MCF 10A (cell line): ENCODE measurements at regions of chr2 and their contacts with region 1.

Region 1: GRCh38 chr2:38274286-38275276 is 102.5 kb downstream of the ATL2 start:
- DNase-seq: peak; percentile 84
- H3K4me3 Mint-ChIP-seq: no peak overlapping the region
- H3K27ac Mint-ChIP-seq: no peak overlapping the region
- H3K4me1 Mint-ChIP-seq: peaks cover 8% of the 10 kb centered on the region
- H3K27me3 Mint-ChIP-seq: no peaks in the 10 kb centered on the region
- CTCF ChIP-seq: peak; percentile 78

Region 2: DNA sequence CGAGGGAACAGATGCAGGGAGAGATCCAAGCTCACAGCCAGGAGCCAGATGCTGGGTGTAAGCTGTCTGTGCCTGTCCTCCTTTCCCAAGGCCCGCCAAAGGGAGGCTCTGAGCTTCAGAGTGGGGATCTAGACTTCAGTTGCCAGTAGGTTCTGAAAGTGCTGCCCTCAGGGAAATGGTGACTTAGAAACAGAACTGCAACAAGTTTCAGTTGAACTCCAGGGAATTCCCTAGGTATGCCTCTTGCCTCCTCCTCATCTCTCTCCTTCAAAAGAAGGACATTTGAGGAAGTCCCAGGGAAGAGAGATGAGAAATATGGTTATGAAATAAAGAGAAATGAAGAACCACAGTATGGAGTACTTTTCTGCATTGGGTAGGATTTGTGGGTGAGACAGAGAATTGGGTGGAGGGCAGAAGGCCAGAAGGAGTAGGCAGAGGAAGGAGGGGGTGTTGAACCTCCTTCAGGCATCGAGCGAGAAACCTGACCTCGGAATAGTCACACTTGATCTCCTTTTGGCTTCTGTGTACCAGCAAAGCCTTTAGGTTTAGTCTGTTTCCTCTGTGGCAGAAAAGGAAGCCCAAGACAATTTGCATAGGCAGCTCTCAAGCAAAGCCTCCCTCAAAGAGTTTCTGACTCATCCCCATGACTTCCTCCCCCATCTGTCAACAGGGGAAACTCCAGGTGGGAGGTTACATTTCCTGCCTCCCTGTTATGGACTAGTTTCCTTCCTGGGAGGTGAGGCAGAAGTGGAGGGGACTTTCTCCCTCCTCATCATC is 884.4 kb before region 1 on chr2:
- CTCF ChIA-PET with region 1: no interaction called
- POLR2A ChIA-PET with region 1: no interaction called
- intact Hi-C with region 1: loop called (anchors 10 kb)
- DNase-seq: peak; percentile 92
- H3K4me3 Mint-ChIP-seq: no peak overlapping the region
- H3K27ac Mint-ChIP-seq: peak overlapping the region; percentile 64
- H3K4me1 Mint-ChIP-seq: peaks cover 19% of the 10 kb centered on the region
- H3K27me3 Mint-ChIP-seq: no peaks in the 10 kb centered on the region
- CTCF ChIP-seq: no peak

Region 3: DNA sequence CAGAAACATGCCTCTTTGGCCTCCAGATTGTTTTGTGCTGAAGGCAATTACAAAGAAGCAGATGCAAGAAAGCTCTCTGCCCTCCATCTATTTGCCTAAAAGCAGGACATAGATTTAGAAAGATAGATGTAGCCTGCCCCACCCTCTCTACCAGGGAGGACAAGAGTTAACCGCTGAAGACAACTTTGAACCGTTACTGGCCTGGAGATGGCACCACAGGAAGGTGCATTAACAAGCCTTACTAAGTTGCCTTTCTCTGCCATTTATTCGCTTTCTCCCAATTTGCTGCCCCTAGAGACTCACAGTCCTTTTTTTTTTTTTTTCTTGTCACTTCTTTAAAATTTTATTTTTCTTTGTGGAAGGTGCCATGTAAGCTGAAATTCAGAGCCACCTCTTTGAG is 378.3 kb before region 1 on chr2:
- CTCF ChIA-PET with region 1: interaction called, 5 read pairs
- POLR2A ChIA-PET with region 1: no interaction called
- intact Hi-C with region 1: loop called (anchors 1 kb)
- DNase-seq: no peak
- H3K4me3 Mint-ChIP-seq: no peak overlapping the region
- H3K27ac Mint-ChIP-seq: no peak overlapping the region
- H3K4me1 Mint-ChIP-seq: peaks cover 14% of the 10 kb centered on the region
- H3K27me3 Mint-ChIP-seq: no peaks in the 10 kb centered on the region
- CTCF ChIP-seq: no peak

Region 4: GRCh38 chr2:38115216-38116032 is 159.2 kb before region 1 on chr2:
- CTCF ChIA-PET with region 1: interaction called, 4 read pairs
- POLR2A ChIA-PET with region 1: interaction called, 5 read pairs
- intact Hi-C with region 1: loop called (anchors 1 kb)
- DNase-seq: peak; percentile 94
- H3K4me3 Mint-ChIP-seq: no peak overlapping the region
- H3K27ac Mint-ChIP-seq: no peak overlapping the region
- H3K4me1 Mint-ChIP-seq: peaks cover 28% of the 10 kb centered on the region
- H3K27me3 Mint-ChIP-seq: no peaks in the 10 kb centered on the region
- CTCF ChIP-seq: peak; percentile 96

Region 5: DNA sequence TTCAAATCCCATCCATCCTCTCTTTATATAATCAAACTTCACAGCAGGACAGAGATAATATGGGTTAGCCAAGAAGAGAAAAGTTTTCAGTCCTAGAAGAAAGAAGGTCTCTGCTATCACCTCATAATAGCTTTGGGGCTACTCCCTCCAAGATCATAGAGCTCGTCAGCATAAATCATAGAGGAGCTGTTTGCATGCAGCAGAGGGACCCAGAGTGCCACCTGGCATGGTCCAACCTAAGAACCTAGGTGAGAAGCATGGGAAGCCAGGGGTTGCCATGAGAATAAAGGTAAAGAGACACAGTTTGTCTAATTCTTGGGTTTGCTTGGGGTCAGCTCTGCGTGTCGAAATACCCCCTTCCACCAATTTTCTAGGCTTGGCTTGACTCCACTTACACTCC is 111.6 kb before region 1 on chr2:
- CTCF ChIA-PET with region 1: interaction called, 3 read pairs
- POLR2A ChIA-PET with region 1: interaction called, 3 read pairs
- intact Hi-C with region 1: loop called (anchors 1 kb)
- DNase-seq: no peak
- H3K4me3 Mint-ChIP-seq: no peak overlapping the region
- H3K27ac Mint-ChIP-seq: peak overlapping the region; percentile 24
- H3K4me1 Mint-ChIP-seq: no peaks in the 10 kb centered on the region
- H3K27me3 Mint-ChIP-seq: no peaks in the 10 kb centered on the region
- CTCF ChIP-seq: no peak

Region 6: GRCh38 chr2:38201784-38202183 is 72.8 kb before region 1 on chr2:
- CTCF ChIA-PET with region 1: no interaction called
- POLR2A ChIA-PET with region 1: no interaction called
- intact Hi-C with region 1: no loop called
- DNase-seq: no peak
- H3K4me3 Mint-ChIP-seq: no peak overlapping the region
- H3K27ac Mint-ChIP-seq: no peak overlapping the region
- H3K4me1 Mint-ChIP-seq: peaks cover 6% of the 10 kb centered on the region
- H3K27me3 Mint-ChIP-seq: no peaks in the 10 kb centered on the region
- CTCF ChIP-seq: no peak